Naive thymus-derived CD4-positive, alpha-beta T cell (primary cell): ENCODE measurements at regions of chr11 and their contacts with region 1.

Region 1: DNA sequence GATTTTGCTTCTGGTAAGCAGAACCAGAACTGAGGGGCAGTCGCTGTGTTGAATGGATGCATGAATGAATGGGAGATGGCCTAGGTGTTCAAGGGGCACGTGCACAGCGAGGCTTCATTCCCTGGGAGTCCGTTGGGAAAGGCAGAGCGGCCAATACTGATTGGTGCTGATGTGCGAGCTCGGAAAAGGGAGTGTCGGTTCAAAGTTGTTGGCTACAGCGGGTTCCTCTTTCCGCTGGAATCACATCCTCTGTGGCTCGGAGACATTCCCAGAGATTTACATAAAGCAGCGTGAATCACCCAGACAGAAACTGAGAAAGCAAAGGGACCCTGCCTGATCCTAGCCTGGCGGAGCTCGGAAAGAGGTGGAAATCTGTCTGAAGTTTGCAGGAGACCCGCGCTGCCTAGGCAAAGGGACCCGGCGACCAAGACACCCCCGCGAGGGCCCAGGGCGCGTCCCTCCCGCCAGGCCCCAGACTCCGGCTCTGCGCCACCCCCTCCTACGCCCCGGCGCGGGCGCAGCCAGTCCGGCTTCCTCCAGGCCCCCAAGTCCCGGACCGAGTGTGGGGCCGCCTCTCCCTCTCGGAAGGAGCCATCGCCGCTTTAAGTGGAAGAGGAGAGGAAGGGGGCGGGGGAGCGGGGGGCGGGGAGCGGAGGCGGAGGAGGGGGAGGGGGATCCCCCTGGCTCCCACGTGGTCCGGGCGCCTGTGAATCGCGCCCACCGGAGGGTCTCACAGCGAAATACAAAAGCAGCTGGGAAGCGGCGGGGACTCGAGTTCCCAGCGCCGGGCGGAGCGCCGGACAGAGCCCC is at the start of gene FJX1:
- DNase-seq: peak in 4 of 9 donors; percentile 0 to 38 (median 7)
- ATAC-seq: no peak
- H3K4me3 ChIP-seq: no peak within 1 kb of the TSS
- H3K4me3 Mint-ChIP-seq: peak within 1 kb of the TSS; percentile 67 to 87 (median 82)
- H3K27ac ChIP-seq: no peak within 1 kb of the TSS
- H3K27ac Mint-ChIP-seq: no peak within 1 kb of the TSS
- H3K4me1 ChIP-seq: peaks cover 0 to 18% of the 10 kb centered on the region in 2 donors
- H3K4me1 Mint-ChIP-seq: peaks cover 0 to 18% (median 12%) of the 10 kb centered on the region in 7 donors
- H3K27me3 ChIP-seq: peaks cover 0 to 11% of the 10 kb centered on the region in 2 donors
- H3K27me3 Mint-ChIP-seq: peaks cover 60 to 78% (median 67%) of the 10 kb centered on the region in 5 donors
- total RNA-seq, gene FJX1: 0.15 TPM in 1 of 5 experiments, not detected in the others

Region 2: DNA sequence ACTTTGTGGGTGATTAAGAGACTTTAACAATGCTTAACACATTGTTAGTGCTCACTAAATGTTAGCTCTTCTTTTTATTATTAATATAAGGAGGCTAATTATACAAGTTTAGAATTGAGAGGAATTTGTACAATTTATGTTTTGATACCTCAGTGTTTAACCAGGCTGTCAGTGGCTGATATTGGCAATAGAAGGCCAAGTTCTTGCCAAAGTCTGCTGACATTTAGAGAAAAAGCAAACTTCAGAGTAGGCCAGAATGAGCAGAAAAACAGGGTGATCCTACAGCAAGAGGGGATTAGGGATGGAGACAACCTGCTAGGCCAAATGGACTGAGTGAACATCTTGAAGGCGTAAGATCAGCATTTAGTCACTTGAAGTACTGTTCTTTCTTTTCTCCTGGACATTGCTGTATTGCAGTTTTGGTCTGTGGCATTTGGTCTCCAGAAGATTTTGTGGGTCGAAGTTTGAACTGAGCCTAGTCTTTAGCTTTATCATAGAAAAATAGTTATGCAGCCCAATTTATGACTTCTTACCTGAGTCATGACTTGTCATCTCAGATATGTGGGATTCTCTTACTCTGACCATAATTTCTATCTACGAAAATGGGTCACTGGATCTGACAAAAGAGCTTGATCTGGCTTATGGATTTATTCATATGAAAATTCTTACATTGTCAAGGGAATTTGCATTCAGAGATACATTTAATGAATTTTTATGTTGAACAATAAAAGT is 53.7 kb after region 1 on chr11:
- CTCF ChIA-PET with region 1: no interaction called
- POLR2A ChIA-PET with region 1: no interaction called
- intact Hi-C with region 1: no loop called
- DNase-seq: no peak
- ATAC-seq: no peak
- H3K4me3 ChIP-seq: no peak overlapping the region
- H3K4me3 Mint-ChIP-seq: peak overlapping the region in 5 of 10 donors; percentile 24 to 61 (median 57)
- H3K27ac ChIP-seq: no peak overlapping the region
- H3K27ac Mint-ChIP-seq: no peak overlapping the region
- H3K4me1 ChIP-seq: peaks cover 3 to 26% of the 10 kb centered on the region in 2 donors
- H3K4me1 Mint-ChIP-seq: peaks cover 13 to 96% (median 87%) of the 10 kb centered on the region in 7 donors
- H3K27me3 ChIP-seq: no peaks in the 10 kb centered on the region
- H3K27me3 Mint-ChIP-seq: no peaks in the 10 kb centered on the region

Region 3: DNA sequence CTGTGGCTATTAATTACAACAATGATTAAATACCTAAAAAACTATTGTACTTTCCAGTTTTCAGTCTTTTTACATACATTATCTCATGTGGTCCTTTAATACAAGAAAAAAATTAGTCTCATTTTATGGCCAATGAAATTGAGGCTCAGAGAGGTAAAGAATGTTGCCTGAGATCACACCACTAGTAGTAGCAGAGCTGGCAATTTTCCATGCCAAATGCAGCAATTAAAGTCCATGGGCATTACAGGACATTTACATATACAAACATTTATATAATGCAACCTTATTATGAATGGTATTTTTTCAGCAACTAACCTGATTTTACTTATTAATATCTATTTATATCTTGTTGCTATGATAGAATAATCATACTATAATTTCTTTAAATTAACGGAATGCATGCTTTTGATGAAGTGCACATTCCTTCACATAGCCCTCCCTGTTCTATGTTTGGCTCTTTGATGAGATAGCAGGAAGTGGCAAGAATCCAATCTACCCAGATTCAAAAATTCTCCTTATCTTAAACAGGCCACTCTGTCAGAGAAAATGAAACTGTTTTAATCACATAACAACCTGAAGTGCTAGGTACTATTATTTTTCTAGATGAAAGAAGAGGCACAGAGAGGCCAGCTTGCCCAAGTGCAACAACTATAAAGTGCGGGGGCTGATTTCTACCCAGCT is 205.1 kb after region 1 on chr11:
- CTCF ChIA-PET with region 1: interaction called, 6 read pairs
- POLR2A ChIA-PET with region 1: no interaction called
- intact Hi-C with region 1: loop called (anchors 1 kb)
- DNase-seq: no peak
- ATAC-seq: no peak
- H3K4me3 ChIP-seq: no peak overlapping the region
- H3K4me3 Mint-ChIP-seq: no peak overlapping the region
- H3K27ac ChIP-seq: no peak overlapping the region
- H3K27ac Mint-ChIP-seq: peak overlapping the region in 1 of 9 donors; percentile 46
- H3K4me1 ChIP-seq: peaks cover 0 to 6% of the 10 kb centered on the region in 2 donors
- H3K4me1 Mint-ChIP-seq: peaks cover 4 to 23% (median 17%) of the 10 kb centered on the region in 7 donors
- H3K27me3 ChIP-seq: no peaks in the 10 kb centered on the region
- H3K27me3 Mint-ChIP-seq: no peaks in the 10 kb centered on the region

Region 4: DNA sequence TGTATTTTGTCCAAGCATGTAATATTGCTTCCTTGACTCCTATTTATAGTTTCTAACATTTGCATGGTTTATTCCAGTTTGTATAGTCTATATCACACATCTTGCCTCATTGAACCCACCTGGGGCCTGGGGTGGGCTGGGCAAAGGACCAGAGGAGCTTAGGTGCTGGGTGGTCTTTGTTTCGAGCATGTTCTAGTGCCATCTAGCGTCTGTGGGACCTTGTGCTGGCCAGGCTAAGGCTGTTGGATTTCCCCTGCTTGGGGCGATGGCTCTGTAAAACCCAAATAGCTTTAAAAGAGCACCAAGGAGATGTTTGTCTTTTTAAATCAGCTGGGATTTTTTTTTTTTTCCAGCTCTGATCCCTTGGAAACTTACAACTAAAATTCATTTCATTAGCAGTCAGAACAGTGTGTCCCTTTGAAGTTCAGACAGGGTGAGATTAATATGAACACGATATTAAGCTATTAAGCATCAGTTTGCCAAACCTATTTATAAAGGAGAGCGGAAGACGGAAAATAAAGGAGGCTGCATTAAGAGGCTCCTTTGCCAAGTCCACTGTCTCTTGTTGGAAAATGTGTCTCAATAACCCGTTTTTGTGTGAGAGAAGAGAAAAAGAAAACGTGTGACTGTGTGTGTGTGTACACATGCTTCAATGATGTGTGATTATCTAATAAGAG is 514.0 kb after region 1 on chr11:
- CTCF ChIA-PET with region 1: no interaction called
- POLR2A ChIA-PET with region 1: no interaction called
- intact Hi-C with region 1: loop called in 1 of 2 experiments (anchors 5 kb)
- DNase-seq: no peak
- ATAC-seq: no peak
- H3K4me3 ChIP-seq: no peak overlapping the region
- H3K4me3 Mint-ChIP-seq: no peak overlapping the region
- H3K27ac ChIP-seq: no peak overlapping the region
- H3K27ac Mint-ChIP-seq: no peak overlapping the region
- H3K4me1 ChIP-seq: no peaks in the 10 kb centered on the region
- H3K4me1 Mint-ChIP-seq: no peaks in the 10 kb centered on the region
- H3K27me3 ChIP-seq: no peaks in the 10 kb centered on the region
- H3K27me3 Mint-ChIP-seq: peaks cover 0 to 32% (median 13%) of the 10 kb centered on the region in 5 donors

Region 5: DNA sequence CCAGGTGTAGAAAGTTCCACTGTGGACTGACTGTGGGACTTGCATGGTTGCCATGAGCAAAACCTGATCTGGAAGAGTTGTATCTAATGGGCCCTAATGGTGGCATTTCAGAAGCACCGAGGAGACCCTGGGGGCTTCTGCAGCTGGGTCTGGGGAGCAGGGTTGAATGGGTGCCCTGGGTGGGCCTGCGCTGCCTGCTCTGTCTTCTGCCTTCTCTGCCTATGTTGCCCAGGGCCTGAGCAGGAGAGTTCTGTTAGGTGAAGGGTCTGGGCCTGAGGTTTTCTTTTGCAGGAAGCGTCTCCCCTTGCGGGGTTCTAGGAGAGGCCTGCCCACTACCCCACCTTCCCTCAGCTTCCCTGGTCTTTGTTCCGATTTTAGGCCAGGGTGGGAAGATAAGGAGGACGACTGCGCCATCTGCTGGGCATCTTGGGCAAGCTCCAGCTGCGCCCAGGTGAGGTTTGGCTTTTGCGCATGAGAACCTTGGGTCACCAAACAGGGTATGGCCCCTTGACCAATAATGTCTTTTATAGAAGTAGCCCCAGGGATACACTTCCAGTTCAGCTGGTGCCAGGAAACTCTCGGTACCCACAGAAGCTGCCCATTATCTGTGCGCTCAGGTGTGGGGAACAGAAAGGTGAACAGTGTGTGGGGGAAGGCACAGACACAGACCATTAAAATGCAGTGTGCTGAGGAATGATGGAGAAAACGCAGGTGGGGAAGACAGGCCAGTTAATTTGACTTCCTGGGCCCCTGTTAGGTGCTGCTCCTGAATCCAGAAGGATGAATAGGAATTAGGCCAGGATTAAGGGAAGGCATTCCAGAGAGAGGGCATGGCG is 648.1 kb after region 1 on chr11:
- CTCF ChIA-PET with region 1: interaction called, 9 read pairs
- POLR2A ChIA-PET with region 1: no interaction called
- intact Hi-C with region 1: loop called in 1 of 2 experiments (anchors 1 kb)
- DNase-seq: peak; percentile 14 to 58 (median 35)
- ATAC-seq: peak; percentile 68
- H3K4me3 ChIP-seq: no peak overlapping the region
- H3K4me3 Mint-ChIP-seq: no peak overlapping the region
- H3K27ac ChIP-seq: no peak overlapping the region
- H3K27ac Mint-ChIP-seq: no peak overlapping the region
- H3K4me1 ChIP-seq: no peaks in the 10 kb centered on the region
- H3K4me1 Mint-ChIP-seq: no peaks in the 10 kb centered on the region
- H3K27me3 ChIP-seq: no peaks in the 10 kb centered on the region
- H3K27me3 Mint-ChIP-seq: peaks cover 0 to 20% (median 13%) of the 10 kb centered on the region in 5 donors

Region 6: GRCh38 chr11:36492724-36493304 is 874.9 kb after region 1 on chr11:
- CTCF ChIA-PET with region 1: interaction called, 6 read pairs
- POLR2A ChIA-PET with region 1: no interaction called
- intact Hi-C with region 1: loop called (anchors 1 to 5 kb)
- DNase-seq: peak in 7 of 9 donors; percentile 11 to 48 (median 36)
- ATAC-seq: peak; percentile 81
- H3K4me3 ChIP-seq: no peak overlapping the region
- H3K4me3 Mint-ChIP-seq: no peak overlapping the region
- H3K27ac ChIP-seq: no peak overlapping the region
- H3K27ac Mint-ChIP-seq: peak overlapping the region in 4 of 9 donors; percentile 7 to 53 (median 44)
- H3K4me1 ChIP-seq: peaks cover 0 to 8% of the 10 kb centered on the region in 2 donors
- H3K4me1 Mint-ChIP-seq: peaks cover 17 to 42% (median 28%) of the 10 kb centered on the region in 7 donors
- H3K27me3 ChIP-seq: no peaks in the 10 kb centered on the region
- H3K27me3 Mint-ChIP-seq: no peaks in the 10 kb centered on the region

Region 7: GRCh38 chr11:36746886-36747710 is 1129.2 kb after region 1 on chr11:
- CTCF ChIA-PET with region 1: no interaction called
- POLR2A ChIA-PET with region 1: no interaction called
- intact Hi-C with region 1: loop called in 1 of 2 experiments (anchors 2 kb)
- DNase-seq: peak; percentile 45 to 84 (median 68)
- ATAC-seq: peak; percentile 100
- H3K4me3 ChIP-seq: no peak overlapping the region
- H3K4me3 Mint-ChIP-seq: no peak overlapping the region
- H3K27ac ChIP-seq: no peak overlapping the region
- H3K27ac Mint-ChIP-seq: no peak overlapping the region
- H3K4me1 ChIP-seq: no peaks in the 10 kb centered on the region
- H3K4me1 Mint-ChIP-seq: peaks cover 0 to 9% (median 3%) of the 10 kb centered on the region in 7 donors
- H3K27me3 ChIP-seq: no peaks in the 10 kb centered on the region
- H3K27me3 Mint-ChIP-seq: peaks cover 21 to 30% (median 25%) of the 10 kb centered on the region in 5 donors